Caco-2 (cell line): ENCODE measurements at regions of chr11 and their contacts with region 1.

Region 1: DNA sequence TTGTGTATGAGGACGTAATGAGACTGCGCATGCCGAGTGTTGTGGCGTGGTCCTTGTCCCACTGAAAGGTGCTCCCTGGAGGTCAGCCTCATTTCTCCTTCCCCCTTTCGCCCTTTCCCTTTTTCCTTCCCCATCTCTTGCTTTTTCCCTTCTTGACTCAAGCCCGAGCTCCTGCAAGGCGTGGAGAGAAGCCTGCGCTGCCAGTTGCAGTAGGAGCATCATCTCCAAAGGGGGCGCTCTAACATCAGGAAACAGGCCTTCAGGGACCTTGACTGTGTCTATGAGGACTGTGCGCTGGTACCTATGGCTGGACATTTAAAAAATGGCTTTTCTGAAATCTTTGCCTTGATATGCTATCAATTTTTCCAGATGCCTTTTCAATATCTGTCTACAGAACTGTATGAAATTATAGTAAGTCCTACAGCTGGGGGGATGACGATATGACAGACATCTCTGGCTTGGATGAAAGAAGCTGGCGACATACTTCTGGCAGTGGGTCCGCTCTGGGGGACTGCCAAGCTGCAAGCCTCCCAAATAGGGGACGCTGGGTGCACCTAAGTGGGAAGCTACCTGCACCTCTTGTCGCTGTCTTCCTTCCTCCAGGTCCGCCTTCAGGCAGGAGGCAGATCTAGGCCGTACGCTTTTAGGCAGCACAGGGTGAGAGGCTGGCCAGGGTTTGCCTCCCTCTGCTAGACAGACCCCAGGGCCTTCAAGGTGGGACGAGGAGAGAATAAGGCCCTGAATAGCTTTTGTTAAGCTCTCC is 96.5 kb downstream of the NXPE2 start:
- DNase-seq: peak; percentile 77 to 81
- H3K4me3 ChIP-seq: no peak overlapping the region
- H3K4me3 Mint-ChIP-seq: no peak overlapping the region
- H3K27ac Mint-ChIP-seq: no peak overlapping the region
- H3K4me1 ChIP-seq: 0 out of 2 replicates have a peak, but pooled peaks cover 6% of the 10 kb centered on the region
- H3K4me1 Mint-ChIP-seq: peaks cover 16% of the 10 kb centered on the region
- H3K27me3 ChIP-seq: no peaks in the 10 kb centered on the region
- H3K27me3 Mint-ChIP-seq: no peaks in the 10 kb centered on the region
- CTCF ChIP-seq: peak; percentile 94 to 95

Region 2: DNA sequence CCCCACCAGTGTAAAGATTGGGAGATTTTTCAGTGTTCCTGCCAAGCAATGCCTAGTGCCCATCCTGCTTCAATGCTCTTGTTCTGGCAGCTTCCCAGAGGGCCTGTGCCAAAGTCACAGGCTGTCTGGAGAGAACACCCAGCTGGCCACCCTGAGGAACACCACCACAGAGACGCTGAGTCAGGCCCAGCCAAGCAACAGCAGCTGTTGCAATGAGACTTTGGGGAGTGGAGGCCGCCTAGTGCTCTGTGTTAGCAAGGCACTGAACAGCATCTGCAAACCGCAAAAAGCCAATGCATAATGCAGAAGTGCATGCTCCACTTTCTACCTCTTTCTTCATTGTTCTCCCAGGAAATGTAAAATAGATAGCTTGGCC is 71.6 kb after region 1 on chr11:
- CTCF ChIA-PET with region 1: no interaction called
- POLR2A ChIA-PET with region 1: no interaction called
- intact Hi-C with region 1: loop called (anchors 2 kb)
- DNase-seq: peak; percentile 25 to 49
- H3K4me3 ChIP-seq: no peak overlapping the region
- H3K4me3 Mint-ChIP-seq: no peak overlapping the region
- H3K27ac Mint-ChIP-seq: no peak overlapping the region
- H3K4me1 ChIP-seq: no peaks in the 10 kb centered on the region
- H3K4me1 Mint-ChIP-seq: no peaks in the 10 kb centered on the region
- H3K27me3 ChIP-seq: no peaks in the 10 kb centered on the region; the same call in 1 of the 2 replicates
- H3K27me3 Mint-ChIP-seq: peaks cover 21% of the 10 kb centered on the region
- CTCF ChIP-seq: no peak

Region 3: DNA sequence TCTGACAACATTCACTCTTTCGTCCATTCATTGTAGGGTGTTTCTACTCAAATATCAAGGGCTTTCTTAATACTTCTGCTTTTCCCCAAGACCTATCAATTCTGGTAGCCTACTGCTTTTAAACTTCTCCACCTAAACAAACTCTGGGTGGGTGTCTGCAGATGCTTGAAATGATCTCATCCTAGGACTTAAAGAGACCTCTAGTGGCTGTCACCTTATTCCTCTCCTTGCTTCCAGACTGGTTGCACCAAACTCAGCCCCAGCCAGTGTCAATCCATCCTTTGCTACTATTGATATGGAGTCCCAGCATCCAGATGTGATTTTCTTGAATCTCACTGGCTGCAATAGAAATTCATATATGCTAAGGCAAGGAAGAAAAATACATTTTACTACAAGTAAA is 178.3 kb after region 1 on chr11:
- CTCF ChIA-PET with region 1: interaction called, 3 read pairs
- POLR2A ChIA-PET with region 1: no interaction called
- intact Hi-C with region 1: loop called (anchors 1 kb)
- DNase-seq: peak in 1 of 2 experiments; percentile 35
- H3K4me3 ChIP-seq: no peak overlapping the region
- H3K4me3 Mint-ChIP-seq: no peak overlapping the region
- H3K27ac Mint-ChIP-seq: no peak overlapping the region
- H3K4me1 ChIP-seq: no peaks in the 10 kb centered on the region
- H3K4me1 Mint-ChIP-seq: no peaks in the 10 kb centered on the region
- H3K27me3 ChIP-seq: no peaks in the 10 kb centered on the region; the same call in 1 of the 2 replicates
- H3K27me3 Mint-ChIP-seq: peaks cover 30% of the 10 kb centered on the region
- CTCF ChIP-seq: peak; percentile 27 to 60

Region 4: DNA sequence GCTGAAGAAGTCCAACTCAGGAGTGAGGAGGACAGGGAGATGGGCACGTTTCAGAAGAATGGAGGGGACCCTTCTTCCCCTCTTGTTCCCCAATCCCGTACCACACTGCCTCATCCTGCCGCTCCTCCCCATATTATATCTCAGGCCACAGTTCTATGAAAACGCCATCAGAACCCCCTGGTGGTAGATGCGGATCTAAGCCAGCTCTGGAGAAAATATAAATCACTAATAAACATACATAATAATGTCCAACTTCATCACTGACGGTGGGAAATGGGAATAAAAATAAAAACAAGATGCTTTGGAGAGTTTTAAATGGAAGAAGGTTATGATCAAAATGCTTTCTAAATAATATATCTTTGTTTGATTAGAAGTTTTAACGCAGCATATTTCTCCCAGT is 329.1 kb after region 1 on chr11:
- CTCF ChIA-PET with region 1: no interaction called
- POLR2A ChIA-PET with region 1: no interaction called
- intact Hi-C with region 1: loop called (anchors 1 kb)
- DNase-seq: no peak
- H3K4me3 ChIP-seq: no peak overlapping the region
- H3K4me3 Mint-ChIP-seq: no peak overlapping the region
- H3K27ac Mint-ChIP-seq: no peak overlapping the region
- H3K4me1 ChIP-seq: no peaks in the 10 kb centered on the region
- H3K4me1 Mint-ChIP-seq: no peaks in the 10 kb centered on the region
- H3K27me3 ChIP-seq: peaks cover 2% of the 10 kb centered on the region
- H3K27me3 Mint-ChIP-seq: peaks cover 37% of the 10 kb centered on the region
- CTCF ChIP-seq: peak in 1 of 2 experiments; percentile 40

Region 5: GRCh38 chr11:115132436-115133228 is 357.9 kb after region 1 on chr11:
- CTCF ChIA-PET with region 1: no interaction called
- POLR2A ChIA-PET with region 1: no interaction called
- intact Hi-C with region 1: loop called (anchors 10 kb)
- DNase-seq: peak in 1 of 2 experiments; percentile 43
- H3K4me3 ChIP-seq: no peak overlapping the region
- H3K4me3 Mint-ChIP-seq: no peak overlapping the region
- H3K27ac Mint-ChIP-seq: no peak overlapping the region
- H3K4me1 ChIP-seq: no peaks in the 10 kb centered on the region
- H3K4me1 Mint-ChIP-seq: no peaks in the 10 kb centered on the region
- H3K27me3 ChIP-seq: no peaks in the 10 kb centered on the region
- H3K27me3 Mint-ChIP-seq: peaks cover 16% of the 10 kb centered on the region
- CTCF ChIP-seq: peak in 1 of 2 experiments; percentile 34